ENCODE measurements at regions of chr16 and their contacts with region 1.

Region 1: GRCh38 chr16:87255866-87256265 is 61.3 kb downstream of the C16orf95 start:
- DNase-seq: no peak
- H3K4me3 ChIP-seq: no peak overlapping the region
- H3K27ac ChIP-seq: no peak overlapping the region
- H3K4me1 ChIP-seq: no peaks in the 10 kb centered on the region
- H3K27me3 ChIP-seq: no peaks in the 10 kb centered on the region
- CTCF ChIP-seq: no peak
- POLR2A ChIP-seq: no peak

Region 2: GRCh38 chr16:87140211-87141200 is 115.4 kb before region 1 on chr16:
- intact Hi-C with region 1: loop called (anchors 5 kb)
- DNase-seq: no peak
- H3K4me3 ChIP-seq: no peak overlapping the region
- H3K27ac ChIP-seq: no peak overlapping the region
- H3K4me1 ChIP-seq: no peaks in the 10 kb centered on the region
- H3K27me3 ChIP-seq: no peaks in the 10 kb centered on the region
- CTCF ChIP-seq: no peak
- POLR2A ChIP-seq: no peak